ENCODE measurements at regions of chr5 and their contacts with region 1.

Region 1: DNA sequence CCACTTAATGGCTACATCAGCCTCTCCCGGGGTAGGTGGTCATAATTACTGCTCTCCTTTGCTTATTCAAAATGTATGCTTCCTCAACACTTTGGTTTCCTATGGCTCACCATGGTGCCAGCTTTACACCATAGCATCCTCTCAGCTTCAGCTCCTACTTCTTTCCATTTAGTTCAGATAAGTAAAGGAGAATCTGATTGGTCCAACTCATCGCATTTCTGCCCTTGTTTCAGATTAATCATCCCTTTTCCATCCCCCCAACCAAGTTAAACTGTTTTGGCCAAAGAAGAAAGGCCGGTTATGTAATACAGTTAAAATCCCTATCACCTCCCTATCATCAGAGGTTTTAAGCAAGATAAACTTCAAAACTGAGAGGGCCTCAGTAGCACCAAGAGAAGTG is 130.5 kb downstream of the CETN3 start:
- DNase-seq: no peak
- H3K4me3 ChIP-seq: no peak overlapping the region
- H3K27ac ChIP-seq: no peak overlapping the region
- H3K4me1 ChIP-seq: no peaks in the 10 kb centered on the region
- H3K27me3 ChIP-seq: no peaks in the 10 kb centered on the region
- CTCF ChIP-seq: no peak

Region 2: DNA sequence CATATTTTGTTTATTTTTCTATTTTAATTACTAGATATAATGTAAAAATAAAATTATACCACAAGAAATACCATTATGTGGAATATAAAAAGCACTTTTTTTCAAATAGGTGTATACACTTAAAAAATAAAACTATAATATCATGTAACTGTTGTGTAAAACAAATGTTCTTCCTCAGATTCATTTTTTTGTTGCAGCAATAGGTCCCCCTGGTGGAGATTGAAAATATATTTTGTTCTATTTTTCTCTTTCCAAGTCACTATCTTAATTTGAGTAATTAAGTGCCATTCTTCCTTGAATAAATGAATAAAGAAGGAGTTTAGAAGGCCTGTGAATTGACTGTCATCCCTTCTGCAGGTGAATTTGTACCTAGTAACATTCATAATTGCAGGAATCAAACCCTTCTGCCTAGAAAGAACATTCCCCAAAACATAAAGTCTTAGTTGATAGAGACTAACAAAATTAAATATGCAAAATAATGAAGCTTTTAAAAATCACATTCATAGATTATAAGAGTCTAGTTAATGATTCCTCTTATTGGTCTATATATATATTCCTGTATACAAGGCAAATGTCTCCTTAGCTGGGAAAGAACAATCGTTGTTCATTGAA is 107.1 kb after region 1 on chr5:
- intact Hi-C with region 1: loop called (anchors 10 kb)
- DNase-seq: no peak
- H3K4me3 ChIP-seq: no peak overlapping the region
- H3K27ac ChIP-seq: no peak overlapping the region
- H3K4me1 ChIP-seq: no peaks in the 10 kb centered on the region
- H3K27me3 ChIP-seq: no peaks in the 10 kb centered on the region
- CTCF ChIP-seq: peak; percentile 22

Measured in colonic mucosa (tissue), 4 donors.